Activated CD4-positive, alpha-beta memory T cell treated with anti-CD3 and anti-CD28 coated beads for 36 hours (primary cell): ENCODE measurements at regions of chr3 and their contacts with region 1.

Region 1: GRCh38 chr3:71087143-71088018 is 496.1 kb downstream of the FOXP1 start:
- DNase-seq: peak; percentile 62
- H3K4me3 Mint-ChIP-seq: peak overlapping the region; percentile 38
- H3K27ac Mint-ChIP-seq: peak overlapping the region; percentile 81
- H3K4me1 Mint-ChIP-seq: peaks cover 88% of the 10 kb centered on the region
- H3K27me3 Mint-ChIP-seq: no peaks in the 10 kb centered on the region

Region 2: GRCh38 chr3:70951316-70951715 is 136.1 kb before region 1 on chr3:
- CTCF ChIA-PET with region 1: no interaction called
- POLR2A ChIA-PET with region 1: no interaction called
- intact Hi-C with region 1: no loop called
- DNase-seq: no peak
- H3K4me3 Mint-ChIP-seq: no peak overlapping the region
- H3K27ac Mint-ChIP-seq: no peak overlapping the region
- H3K4me1 Mint-ChIP-seq: peaks cover 6% of the 10 kb centered on the region
- H3K27me3 Mint-ChIP-seq: no peaks in the 10 kb centered on the region

Region 3: GRCh38 chr3:71035314-71035713 is 52.1 kb before region 1 on chr3:
- CTCF ChIA-PET with region 1: no interaction called
- POLR2A ChIA-PET with region 1: no interaction called
- intact Hi-C with region 1: no loop called
- DNase-seq: no peak
- H3K4me3 Mint-ChIP-seq: no peak overlapping the region
- H3K27ac Mint-ChIP-seq: no peak overlapping the region
- H3K4me1 Mint-ChIP-seq: peaks cover 91% of the 10 kb centered on the region
- H3K27me3 Mint-ChIP-seq: no peaks in the 10 kb centered on the region

Region 4: DNA sequence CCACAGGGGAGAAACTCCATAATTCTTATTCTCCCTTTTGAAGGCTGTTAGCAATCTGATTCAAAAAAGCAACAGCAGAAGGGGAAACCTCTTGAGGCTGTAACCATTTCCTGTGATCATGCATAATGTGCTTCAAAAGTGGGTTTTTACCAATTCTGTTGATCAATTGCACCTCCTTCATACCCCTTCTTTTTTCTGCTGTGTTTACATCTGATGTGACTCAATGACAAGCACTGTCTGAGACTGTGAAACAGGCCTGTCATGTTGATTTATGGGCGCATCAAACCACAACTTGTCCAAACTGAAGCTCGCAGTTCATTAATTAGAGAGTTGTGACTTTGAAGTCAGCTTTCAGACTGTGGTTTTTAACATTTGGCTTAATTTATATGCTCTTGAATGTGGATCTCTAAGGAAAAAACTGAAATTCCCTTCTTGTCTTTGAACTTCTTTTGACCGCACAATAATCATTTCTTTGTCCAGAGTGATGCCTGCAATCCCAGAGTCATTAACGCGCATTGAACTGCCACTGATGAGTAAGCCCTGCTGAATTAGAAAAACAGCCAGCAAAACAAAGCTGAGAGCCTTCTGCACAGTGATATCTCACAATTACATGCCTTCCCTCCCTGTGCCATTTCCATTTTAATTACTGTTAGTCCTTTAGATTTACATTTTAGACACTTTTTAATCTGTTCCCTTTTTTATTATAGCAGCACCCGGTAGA is 36.7 kb before region 1 on chr3:
- CTCF ChIA-PET with region 1: no interaction called
- POLR2A ChIA-PET with region 1: interaction called, 8 read pairs
- intact Hi-C with region 1: loop called (anchors 1 kb)
- DNase-seq: peak; percentile 61
- H3K4me3 Mint-ChIP-seq: peak overlapping the region; percentile 6
- H3K27ac Mint-ChIP-seq: peak overlapping the region; percentile 86
- H3K4me1 Mint-ChIP-seq: peaks cover 100% of the 10 kb centered on the region
- H3K27me3 Mint-ChIP-seq: no peaks in the 10 kb centered on the region

Region 5: DNA sequence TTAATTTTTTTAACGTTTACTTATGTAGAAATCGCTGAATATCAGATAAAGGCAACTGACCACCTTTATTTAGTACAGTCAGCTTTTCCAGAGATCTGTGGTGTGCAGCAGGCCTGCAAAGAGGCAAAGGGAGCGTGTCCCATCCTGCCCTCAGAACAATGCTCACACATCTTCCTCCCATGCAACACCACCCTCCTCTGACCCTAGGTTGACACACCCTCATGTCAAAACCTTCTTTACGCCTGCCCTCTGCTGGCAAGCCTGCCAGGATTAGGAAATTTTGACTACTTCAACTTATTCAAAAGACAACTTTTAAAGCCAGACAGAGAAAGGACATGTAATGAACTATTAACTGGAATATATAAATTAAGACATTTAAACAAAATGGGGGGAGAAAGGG is 17.6 kb before region 1 on chr3:
- CTCF ChIA-PET with region 1: interaction called, 10 read pairs
- POLR2A ChIA-PET with region 1: interaction called, 20 read pairs
- intact Hi-C with region 1: loop called (anchors 1 kb)
- DNase-seq: peak; percentile 84
- H3K4me3 Mint-ChIP-seq: no peak overlapping the region
- H3K27ac Mint-ChIP-seq: peak overlapping the region; percentile 62
- H3K4me1 Mint-ChIP-seq: peaks cover 74% of the 10 kb centered on the region
- H3K27me3 Mint-ChIP-seq: no peaks in the 10 kb centered on the region

Region 6: GRCh38 chr3:71201939-71202338 is 114.6 kb after region 1 on chr3:
- CTCF ChIA-PET with region 1: no interaction called
- POLR2A ChIA-PET with region 1: no interaction called
- intact Hi-C with region 1: no loop called
- DNase-seq: no peak
- H3K4me3 Mint-ChIP-seq: no peak overlapping the region
- H3K27ac Mint-ChIP-seq: no peak overlapping the region
- H3K4me1 Mint-ChIP-seq: peaks cover 52% of the 10 kb centered on the region
- H3K27me3 Mint-ChIP-seq: no peaks in the 10 kb centered on the region

Region 7: GRCh38 chr3:71258116-71258515 is 170.7 kb after region 1 on chr3:
- CTCF ChIA-PET with region 1: no interaction called
- POLR2A ChIA-PET with region 1: no interaction called
- intact Hi-C with region 1: no loop called
- DNase-seq: no peak
- H3K4me3 Mint-ChIP-seq: no peak overlapping the region
- H3K27ac Mint-ChIP-seq: no peak overlapping the region
- H3K4me1 Mint-ChIP-seq: peaks cover 56% of the 10 kb centered on the region
- H3K27me3 Mint-ChIP-seq: no peaks in the 10 kb centered on the region

Region 8: DNA sequence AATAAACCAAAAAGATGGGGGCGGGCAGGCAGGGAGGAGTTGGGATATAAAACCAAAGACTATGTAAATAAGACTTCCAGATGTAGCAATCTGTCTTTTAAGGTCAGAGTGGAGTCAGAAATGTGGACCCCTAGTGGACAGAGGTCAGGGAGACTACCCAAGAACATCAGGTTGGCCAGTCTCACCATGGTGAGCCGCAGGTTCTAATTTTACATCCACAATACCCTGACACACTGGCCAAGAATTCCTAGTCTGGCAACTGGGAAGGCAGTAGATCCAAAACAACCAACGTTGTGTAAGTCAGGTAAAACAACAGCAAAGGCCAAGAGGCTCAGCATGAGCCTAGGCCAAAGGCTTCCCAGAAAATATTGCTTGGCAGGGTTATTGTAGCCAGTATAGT is 292.7 kb after region 1 on chr3:
- CTCF ChIA-PET with region 1: no interaction called
- POLR2A ChIA-PET with region 1: no interaction called
- intact Hi-C with region 1: loop called (anchors 1 kb)
- DNase-seq: no peak
- H3K4me3 Mint-ChIP-seq: no peak overlapping the region
- H3K27ac Mint-ChIP-seq: peak overlapping the region; percentile 85
- H3K4me1 Mint-ChIP-seq: peaks cover 82% of the 10 kb centered on the region
- H3K27me3 Mint-ChIP-seq: no peaks in the 10 kb centered on the region

Region 9: GRCh38 chr3:71423151-71423906 is 335.9 kb after region 1 on chr3:
- CTCF ChIA-PET with region 1: no interaction called
- POLR2A ChIA-PET with region 1: no interaction called
- intact Hi-C with region 1: loop called (anchors 1 kb)
- DNase-seq: no peak
- H3K4me3 Mint-ChIP-seq: no peak overlapping the region
- H3K27ac Mint-ChIP-seq: peak overlapping the region; percentile 85
- H3K4me1 Mint-ChIP-seq: peaks cover 81% of the 10 kb centered on the region
- H3K27me3 Mint-ChIP-seq: no peaks in the 10 kb centered on the region

Region 10: GRCh38 chr3:71512000-71512399 is 424.6 kb after region 1 on chr3:
- CTCF ChIA-PET with region 1: no interaction called
- POLR2A ChIA-PET with region 1: no interaction called
- intact Hi-C with region 1: loop called (anchors 5 kb)
- DNase-seq: peak; percentile 46
- H3K4me3 Mint-ChIP-seq: no peak overlapping the region
- H3K27ac Mint-ChIP-seq: no peak overlapping the region
- H3K4me1 Mint-ChIP-seq: peaks cover 6% of the 10 kb centered on the region
- H3K27me3 Mint-ChIP-seq: no peaks in the 10 kb centered on the region